ENCODE measurements at regions of chr7 and their contacts with region 1.

Region 1: GRCh38 chr7:32179567-32179966 is 109.4 kb upstream of the PDE1C start:
- DNase-seq: no peak
- ATAC-seq: no peak
- H3K4me3 ChIP-seq: no peak overlapping the region
- H3K27ac ChIP-seq: no peak overlapping the region
- H3K4me1 ChIP-seq: peaks cover 0 to 5% (median 0%) of the 10 kb centered on the region in 9 donors
- H3K27me3 ChIP-seq: no peaks in the 10 kb centered on the region
- CTCF ChIP-seq: no peak

Region 2: GRCh38 chr7:31763548-31763947 is 416.0 kb before region 1 on chr7:
- intact Hi-C with region 1: loop called in 1 of 10 experiments (anchors 10 kb)
- DNase-seq: no peak
- ATAC-seq: no peak
- H3K4me3 ChIP-seq: no peak overlapping the region
- H3K27ac ChIP-seq: no peak overlapping the region
- H3K4me1 ChIP-seq: peaks cover 0 to 3% (median 0%) of the 10 kb centered on the region in 9 donors
- H3K27me3 ChIP-seq: no peaks in the 10 kb centered on the region
- CTCF ChIP-seq: peak in 4 of 9 donors; percentile 3 to 18 (median 13)